Psoas muscle (tissue), 8 donors: ENCODE measurements at regions of chr12 and their contacts with region 1.

Region 1: DNA sequence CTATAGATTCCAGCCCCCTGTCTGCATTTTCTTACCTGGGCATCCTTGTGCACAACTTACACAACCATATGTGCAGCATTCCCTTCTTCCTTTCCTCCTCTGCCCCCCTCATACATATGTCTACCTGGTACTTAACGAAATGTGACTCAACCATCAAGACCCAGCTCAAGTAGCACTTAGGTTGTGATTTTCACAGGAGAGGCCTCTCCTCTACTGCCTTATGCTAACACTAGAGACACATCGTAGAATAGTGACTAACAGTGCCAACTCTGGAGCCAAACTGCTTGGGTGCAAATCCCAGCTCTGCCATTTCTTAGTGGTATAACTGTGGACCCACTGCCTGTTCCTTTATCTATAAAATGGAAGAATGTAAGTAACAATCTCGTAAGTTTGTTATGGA is 24.1 kb upstream of the PLEKHA5 start:
- DNase-seq: no peak
- ATAC-seq: no peak
- H3K4me3 ChIP-seq: no peak overlapping the region
- H3K27ac ChIP-seq: no peak overlapping the region
- H3K4me1 ChIP-seq: no peaks in the 10 kb centered on the region
- H3K27me3 ChIP-seq: no peaks in the 10 kb centered on the region
- CTCF ChIP-seq: no peak

Region 2: GRCh38 chr12:18932715-18933114 is 172.7 kb before region 1 on chr12:
- intact Hi-C with region 1: no loop called
- DNase-seq: no peak
- ATAC-seq: no peak
- H3K4me3 ChIP-seq: no peak overlapping the region
- H3K27ac ChIP-seq: no peak overlapping the region
- H3K4me1 ChIP-seq: no peaks in the 10 kb centered on the region
- H3K27me3 ChIP-seq: no peaks in the 10 kb centered on the region
- CTCF ChIP-seq: no peak

Region 3: DNA sequence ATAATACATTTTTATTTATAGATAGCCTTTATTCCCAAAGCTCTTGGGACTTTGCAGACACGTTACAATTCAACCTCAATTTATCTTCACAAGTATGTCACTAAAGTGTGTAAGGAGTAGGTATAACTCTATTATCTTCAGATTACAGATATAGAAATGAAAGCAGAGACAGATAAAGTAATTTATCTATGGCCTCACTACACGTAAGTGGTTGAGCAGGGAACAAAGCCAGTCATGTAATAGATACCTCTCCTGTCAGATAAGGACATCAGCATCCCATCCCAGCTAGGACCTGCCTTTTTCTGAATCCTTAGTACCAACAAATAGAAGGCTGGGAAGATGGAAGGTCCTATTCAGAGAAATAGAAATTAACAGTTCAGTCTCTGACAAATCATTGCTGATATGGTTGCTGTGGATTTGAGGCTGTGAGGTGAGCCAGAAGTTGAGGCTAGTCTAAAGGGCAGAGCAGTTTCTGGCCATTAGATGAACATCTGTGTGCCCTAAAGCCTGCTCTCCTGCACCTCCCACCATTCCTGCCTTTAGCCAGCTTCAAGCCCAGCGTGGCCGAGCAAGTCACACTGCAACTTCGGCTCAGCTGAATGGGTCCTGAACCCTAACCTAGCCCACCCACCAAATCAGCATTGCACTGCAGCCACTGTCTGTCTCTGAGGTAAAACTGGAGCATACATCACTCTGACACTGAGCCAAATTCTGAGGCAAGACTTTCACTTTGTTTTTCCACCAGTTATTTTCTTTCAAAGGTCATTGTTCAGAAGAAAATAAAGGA is 47.0 kb before region 1 on chr12:
- intact Hi-C with region 1: loop called in 1 of 2 experiments (anchors 1 kb)
- DNase-seq: no peak
- ATAC-seq: no peak
- H3K4me3 ChIP-seq: no peak overlapping the region
- H3K27ac ChIP-seq: no peak overlapping the region
- H3K4me1 ChIP-seq: no peaks in the 10 kb centered on the region
- H3K27me3 ChIP-seq: no peaks in the 10 kb centered on the region
- CTCF ChIP-seq: no peak

Region 4: DNA sequence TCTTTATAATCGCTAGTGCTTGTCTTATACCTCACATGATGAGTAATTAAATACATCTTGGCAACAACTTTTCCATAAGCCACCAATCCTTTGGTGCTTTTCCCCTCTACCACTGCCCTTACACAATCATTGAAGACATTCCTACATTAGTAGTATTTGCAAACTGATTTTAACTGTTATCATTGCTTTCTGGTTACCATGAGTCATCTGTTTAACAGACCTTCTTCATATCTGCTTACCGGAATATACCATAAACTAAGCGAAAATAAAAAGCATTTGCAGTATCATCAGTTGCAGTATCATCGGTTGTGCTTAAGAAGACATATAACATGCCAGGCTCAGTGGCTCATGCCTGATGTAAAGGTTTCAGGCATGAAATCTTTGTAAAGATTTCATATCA is 30.8 kb before region 1 on chr12:
- intact Hi-C with region 1: no loop called
- DNase-seq: no peak
- ATAC-seq: no peak
- H3K4me3 ChIP-seq: no peak overlapping the region
- H3K27ac ChIP-seq: no peak overlapping the region
- H3K4me1 ChIP-seq: no peaks in the 10 kb centered on the region
- H3K27me3 ChIP-seq: no peaks in the 10 kb centered on the region
- CTCF ChIP-seq: no peak

Region 5: DNA sequence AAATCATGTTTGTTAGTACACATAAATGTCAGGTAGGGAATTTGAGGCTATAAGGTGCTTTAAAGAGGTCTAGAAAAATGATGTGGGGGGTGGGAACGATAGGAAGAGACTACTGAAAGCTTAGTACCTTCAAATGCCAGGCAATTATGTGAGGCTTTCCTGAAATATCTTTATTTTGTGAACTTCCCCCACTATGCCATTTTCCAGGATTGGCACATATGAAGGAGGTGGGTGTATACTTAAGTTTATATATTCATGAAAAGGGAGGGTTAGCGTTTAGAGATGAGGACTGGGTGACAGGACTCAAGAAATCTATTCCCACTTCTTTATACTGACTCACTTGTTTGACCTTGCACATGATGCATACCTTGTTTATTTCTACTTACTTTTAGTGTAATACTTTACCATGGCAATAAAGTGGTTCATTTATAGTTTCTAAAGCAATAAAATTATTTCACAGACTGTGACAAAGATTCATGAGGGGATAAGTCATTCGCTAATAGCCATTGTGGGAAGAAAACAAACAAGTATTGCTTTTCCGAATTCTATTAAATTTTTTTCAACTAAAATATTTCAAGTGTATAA is 101.1 kb after region 1 on chr12:
- intact Hi-C with region 1: no loop called
- DNase-seq: no peak
- ATAC-seq: no peak
- H3K4me3 ChIP-seq: no peak overlapping the region
- H3K27ac ChIP-seq: no peak overlapping the region
- H3K4me1 ChIP-seq: no peaks in the 10 kb centered on the region
- H3K27me3 ChIP-seq: no peaks in the 10 kb centered on the region
- CTCF ChIP-seq: no peak